ENCODE measurements at regions of chr7 and their contacts with region 1.

Region 1: GRCh38 chr7:117119192-117119924 is 166.1 kb downstream of the ST7 start:
- DNase-seq: peak; percentile 71 to 82
- ATAC-seq: peak in 6 of 8 donors; percentile 45 to 76 (median 57)
- H3K4me3 ChIP-seq: no peak overlapping the region
- H3K27ac ChIP-seq: no peak overlapping the region
- H3K4me1 ChIP-seq: peaks cover 0 to 30% (median 8%) of the 10 kb centered on the region in 9 donors
- H3K27me3 ChIP-seq: no peaks in the 10 kb centered on the region
- CTCF ChIP-seq: peak; percentile 60 to 94 (median 89)

Region 2: GRCh38 chr7:116984917-116985316 is 134.4 kb before region 1 on chr7:
- intact Hi-C with region 1: loop called (anchors 1 to 5 kb)
- DNase-seq: no peak
- ATAC-seq: peak in 1 of 8 donors; percentile 33
- H3K4me3 ChIP-seq: no peak overlapping the region
- H3K27ac ChIP-seq: no peak overlapping the region
- H3K4me1 ChIP-seq: peaks cover 0 to 23% (median 0%) of the 10 kb centered on the region in 9 donors
- H3K27me3 ChIP-seq: no peaks in the 10 kb centered on the region
- CTCF ChIP-seq: peak; percentile 27 to 77 (median 71)

Region 3: DNA sequence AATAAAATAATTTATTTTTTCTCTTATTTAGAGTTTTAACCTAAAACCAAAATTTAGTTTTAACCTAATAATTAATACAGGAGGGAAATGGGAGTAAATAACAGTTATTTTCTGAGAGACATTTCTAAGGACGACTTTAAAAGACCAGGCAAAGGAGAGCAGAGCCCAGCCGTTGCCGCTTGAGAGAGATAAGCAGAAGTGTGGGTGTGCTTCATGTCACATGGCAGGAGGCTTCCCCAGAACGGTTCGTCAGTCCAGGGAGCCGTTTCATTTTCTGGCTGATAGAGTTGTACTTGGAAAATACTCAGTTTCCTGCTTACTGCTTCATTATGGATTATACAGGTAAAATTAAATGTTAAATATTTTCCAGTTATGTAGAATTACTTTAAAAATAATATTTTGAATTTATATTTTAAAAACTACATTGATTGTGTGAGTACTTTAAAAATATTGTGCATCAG is 104.7 kb before region 1 on chr7:
- intact Hi-C with region 1: loop called in 1 of 10 experiments (anchors 5 kb)
- DNase-seq: peak; percentile 27 to 69
- ATAC-seq: peak in 7 of 8 donors; percentile 87 to 95 (median 93)
- H3K4me3 ChIP-seq: peak overlapping the region in 6 of 10 donors; percentile 10 to 43 (median 16)
- H3K27ac ChIP-seq: peak overlapping the region in 8 of 10 donors; percentile 9 to 60 (median 34)
- H3K4me1 ChIP-seq: peaks cover 0 to 80% (median 28%) of the 10 kb centered on the region in 9 donors
- H3K27me3 ChIP-seq: no peaks in the 10 kb centered on the region
- CTCF ChIP-seq: no peak

Region 4: DNA sequence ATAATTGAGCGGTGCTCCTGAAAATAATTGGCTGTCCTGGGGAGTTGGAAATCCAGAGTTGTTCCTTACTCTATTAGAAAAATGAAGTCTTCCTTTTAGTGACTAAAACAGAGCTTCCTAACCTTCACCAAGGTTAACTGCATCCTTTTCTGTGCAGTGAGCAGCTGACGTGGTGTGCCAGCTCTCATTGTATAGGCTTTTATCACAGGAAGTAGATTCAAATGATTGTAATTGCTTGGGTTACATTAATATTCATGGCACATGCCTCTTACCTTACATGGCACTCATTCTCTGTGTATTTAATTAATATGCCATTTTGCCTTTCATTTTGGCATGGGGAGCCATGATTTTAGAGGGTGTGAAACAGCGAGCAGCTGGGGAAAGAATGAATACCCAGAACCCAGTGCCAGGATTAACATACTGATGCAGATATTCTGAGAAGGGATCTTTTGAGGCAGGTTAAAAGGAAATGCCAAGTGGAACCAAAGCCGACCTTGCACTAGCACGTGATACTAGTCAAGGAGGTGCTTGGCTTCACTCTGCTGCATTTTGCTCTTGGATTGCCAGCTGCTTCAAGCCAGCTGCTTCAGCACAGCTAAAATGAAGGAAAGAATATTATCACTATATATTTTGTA is 50.7 kb before region 1 on chr7:
- intact Hi-C with region 1: loop called in 1 of 10 experiments (anchors 10 kb)
- DNase-seq: no peak
- ATAC-seq: peak in 1 of 8 donors; percentile 25
- H3K4me3 ChIP-seq: no peak overlapping the region
- H3K27ac ChIP-seq: peak overlapping the region in 4 of 10 donors; percentile 9 to 42 (median 32)
- H3K4me1 ChIP-seq: peaks cover 2 to 55% (median 36%) of the 10 kb centered on the region in 9 donors
- H3K27me3 ChIP-seq: no peaks in the 10 kb centered on the region
- CTCF ChIP-seq: no peak